ENCODE measurements at regions of chr11 and their contacts with region 1.

Region 1: DNA sequence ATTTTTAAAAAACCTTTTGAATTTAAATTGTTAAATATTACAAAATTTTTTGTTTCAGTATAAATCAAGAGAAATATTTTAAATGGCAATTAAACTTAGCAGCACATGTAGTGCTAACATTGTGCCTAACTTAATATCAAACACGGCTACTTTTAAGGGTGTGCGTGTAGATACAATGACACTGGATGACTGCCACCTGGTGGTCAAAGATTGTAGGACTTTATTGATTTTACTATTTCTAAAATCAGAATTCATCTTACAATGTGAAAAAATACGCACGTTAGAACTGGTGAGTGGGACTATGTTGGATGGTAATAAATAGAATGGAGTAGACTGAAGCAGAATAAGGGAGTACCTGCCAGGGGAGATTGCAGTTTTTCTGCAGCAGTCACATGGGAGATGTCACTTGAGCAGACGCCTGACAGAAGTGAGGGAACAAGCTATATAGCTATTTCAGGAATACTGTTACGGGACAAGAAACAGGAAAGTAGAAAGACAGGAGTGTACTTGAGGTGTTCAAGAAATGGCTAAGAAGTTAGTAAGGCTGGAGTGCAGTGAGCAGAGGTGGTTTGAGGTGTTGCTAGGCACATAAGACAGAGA is 52.9 kb downstream of the UVRAG start:
- DNase-seq: no peak

Region 2: DNA sequence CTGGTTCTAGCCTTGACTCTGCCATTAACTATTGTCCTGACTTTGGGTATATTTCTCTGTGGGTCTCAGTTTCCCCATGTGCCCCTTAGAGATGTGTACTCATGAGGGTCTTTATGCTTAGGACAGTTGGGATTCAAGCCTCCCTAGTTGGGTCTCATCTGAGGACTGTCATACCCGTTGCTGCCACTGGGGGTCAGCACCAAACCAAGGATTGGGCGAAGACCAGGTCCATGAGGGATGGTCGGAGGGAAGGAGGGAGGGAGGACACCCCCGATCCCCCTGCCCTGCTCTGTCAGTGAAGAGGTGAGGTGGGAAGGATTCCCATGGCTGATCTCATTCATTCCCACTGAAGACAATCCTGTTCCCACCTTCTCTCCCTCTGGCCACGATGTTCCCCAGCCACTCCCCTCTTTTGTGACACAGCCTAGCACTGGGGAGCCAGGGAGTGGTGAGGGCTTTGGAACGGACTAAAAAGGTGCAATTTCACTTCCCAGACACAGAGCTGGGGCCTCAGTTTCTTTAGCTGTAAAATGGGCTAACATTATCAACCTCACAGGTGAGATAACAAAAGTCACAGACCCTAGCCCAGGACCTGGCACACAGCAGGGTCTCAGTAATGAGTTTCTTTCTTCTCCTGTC is 422.4 kb before region 1 on chr11:
- intact Hi-C with region 1: loop called (anchors 10 kb)
- DNase-seq: peak; percentile 85

Region 3: GRCh38 chr11:75547580-75548058 is 320.3 kb before region 1 on chr11:
- intact Hi-C with region 1: loop called (anchors 10 kb)
- DNase-seq: no peak

Region 4: DNA sequence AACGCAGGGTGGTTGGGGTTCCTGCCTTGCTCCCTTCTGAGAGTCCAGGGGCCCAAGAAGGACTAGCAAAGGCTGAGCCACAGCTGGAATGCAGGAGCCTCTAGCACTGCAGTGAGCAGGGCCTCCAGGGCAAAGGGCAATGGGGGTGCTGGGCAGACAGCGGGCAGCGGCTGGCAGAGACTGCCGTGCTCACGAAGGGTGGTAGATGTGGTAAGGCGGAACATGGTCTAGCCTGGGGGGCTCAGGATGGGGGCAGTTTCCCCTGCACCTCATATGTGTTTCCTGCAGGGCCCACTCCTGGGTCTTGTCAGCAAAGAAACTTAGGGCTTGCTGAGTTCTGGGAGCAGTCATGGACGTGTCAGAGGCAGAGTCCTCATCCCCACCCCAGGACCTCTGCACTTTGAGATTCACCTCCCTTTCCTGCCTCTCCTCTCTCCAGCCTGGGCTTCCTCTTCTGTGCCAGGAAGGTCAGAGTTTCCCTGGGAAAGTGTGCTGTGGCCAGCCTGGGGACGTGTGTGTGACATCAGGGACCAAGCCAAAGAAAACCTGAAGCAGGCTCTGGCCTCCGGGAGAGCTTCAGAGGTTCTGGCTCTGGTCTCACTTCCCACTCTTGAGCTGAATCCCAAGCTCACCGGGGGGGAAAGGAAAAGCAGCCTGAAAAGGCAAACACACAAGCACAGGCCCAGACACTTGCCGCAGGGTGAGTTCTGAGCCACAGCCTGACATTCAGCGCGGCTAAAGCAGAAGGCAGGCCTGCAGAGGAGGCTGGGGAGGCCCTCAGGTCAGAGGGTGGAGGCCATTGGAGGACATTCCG is 145.8 kb before region 1 on chr11:
- intact Hi-C with region 1: loop called (anchors 10 kb)
- DNase-seq: no peak

Region 5: GRCh38 chr11:75802913-75803820 is 64.7 kb before region 1 on chr11:
- intact Hi-C with region 1: loop called (anchors 2 kb)
- DNase-seq: peak; percentile 85